GM12878 (cell line): ENCODE measurements at regions of chr1 and their contacts with region 1.

Region 1: GRCh38 chr1:165367375-165367993 is 11.0 kb upstream of the LMX1A start:
- DNase-seq: peak; percentile 3
- ATAC-seq: peak; percentile 91
- H3K4me3 ChIP-seq: no peak overlapping the region
- H3K27ac ChIP-seq: no peak overlapping the region
- H3K4me1 ChIP-seq: no peaks in the 10 kb centered on the region
- H3K27me3 ChIP-seq: no peaks in the 10 kb centered on the region; a peak in 1 of 4 replicates
- CTCF ChIP-seq: peak; percentile 79 to 97 (median 96)
- EP300 ChIP-seq: no peak
- POLR2A ChIP-seq: no peak
- RAD21 ChIP-seq: peak; percentile 53

Region 2: GRCh38 chr1:165129568-165130164 is 237.8 kb before region 1 on chr1:
- CTCF ChIA-PET with region 1: interaction called, 13 read pairs
- POLR2A ChIA-PET with region 1: no interaction called
- RAD21 ChIA-PET with region 1: interaction called, 5 read pairs
- SMC1A ChIA-PET with region 1: interaction called, 9 read pairs
- in situ Hi-C with region 1: no loop called
- intact Hi-C with region 1: no loop called
- DNase-seq: no peak
- ATAC-seq: peak; percentile 89
- H3K4me3 ChIP-seq: no peak overlapping the region
- H3K27ac ChIP-seq: no peak overlapping the region
- H3K4me1 ChIP-seq: no peaks in the 10 kb centered on the region
- H3K27me3 ChIP-seq: no peaks in the 10 kb centered on the region; a peak in 1 of 4 replicates
- CTCF ChIP-seq: peak; percentile 65 to 69 (median 68)
- EP300 ChIP-seq: no peak
- POLR2A ChIP-seq: no peak
- RAD21 ChIP-seq: peak; percentile 40

Region 3: GRCh38 chr1:165257969-165258459 is 109.5 kb before region 1 on chr1:
- CTCF ChIA-PET with region 1: interaction called, 37 read pairs
- POLR2A ChIA-PET with region 1: no interaction called
- RAD21 ChIA-PET with region 1: interaction called, 3 read pairs
- SMC1A ChIA-PET with region 1: interaction called, 6 read pairs
- in situ Hi-C with region 1: no loop called
- intact Hi-C with region 1: loop called (anchors 2 kb)
- DNase-seq: peak; percentile 9
- ATAC-seq: peak; percentile 88
- H3K4me3 ChIP-seq: no peak overlapping the region
- H3K27ac ChIP-seq: no peak overlapping the region
- H3K4me1 ChIP-seq: no peaks in the 10 kb centered on the region
- H3K27me3 ChIP-seq: no peaks in the 10 kb centered on the region
- CTCF ChIP-seq: peak; percentile 67 to 82 (median 76)
- EP300 ChIP-seq: no peak
- POLR2A ChIP-seq: no peak
- RAD21 ChIP-seq: peak; percentile 48

Region 4: GRCh38 chr1:165325460-165326203 is 41.9 kb before region 1 on chr1:
- CTCF ChIA-PET with region 1: no interaction called
- POLR2A ChIA-PET with region 1: no interaction called
- RAD21 ChIA-PET with region 1: no interaction called
- SMC1A ChIA-PET with region 1: no interaction called
- in situ Hi-C with region 1: no loop called
- intact Hi-C with region 1: no loop called
- DNase-seq: no peak
- ATAC-seq: no peak
- H3K4me3 ChIP-seq: no peak overlapping the region
- H3K27ac ChIP-seq: no peak overlapping the region
- H3K4me1 ChIP-seq: no peaks in the 10 kb centered on the region
- H3K27me3 ChIP-seq: no peaks in the 10 kb centered on the region
- CTCF ChIP-seq: no peak
- EP300 ChIP-seq: no peak
- POLR2A ChIP-seq: no peak
- RAD21 ChIP-seq: no peak

Region 5: DNA sequence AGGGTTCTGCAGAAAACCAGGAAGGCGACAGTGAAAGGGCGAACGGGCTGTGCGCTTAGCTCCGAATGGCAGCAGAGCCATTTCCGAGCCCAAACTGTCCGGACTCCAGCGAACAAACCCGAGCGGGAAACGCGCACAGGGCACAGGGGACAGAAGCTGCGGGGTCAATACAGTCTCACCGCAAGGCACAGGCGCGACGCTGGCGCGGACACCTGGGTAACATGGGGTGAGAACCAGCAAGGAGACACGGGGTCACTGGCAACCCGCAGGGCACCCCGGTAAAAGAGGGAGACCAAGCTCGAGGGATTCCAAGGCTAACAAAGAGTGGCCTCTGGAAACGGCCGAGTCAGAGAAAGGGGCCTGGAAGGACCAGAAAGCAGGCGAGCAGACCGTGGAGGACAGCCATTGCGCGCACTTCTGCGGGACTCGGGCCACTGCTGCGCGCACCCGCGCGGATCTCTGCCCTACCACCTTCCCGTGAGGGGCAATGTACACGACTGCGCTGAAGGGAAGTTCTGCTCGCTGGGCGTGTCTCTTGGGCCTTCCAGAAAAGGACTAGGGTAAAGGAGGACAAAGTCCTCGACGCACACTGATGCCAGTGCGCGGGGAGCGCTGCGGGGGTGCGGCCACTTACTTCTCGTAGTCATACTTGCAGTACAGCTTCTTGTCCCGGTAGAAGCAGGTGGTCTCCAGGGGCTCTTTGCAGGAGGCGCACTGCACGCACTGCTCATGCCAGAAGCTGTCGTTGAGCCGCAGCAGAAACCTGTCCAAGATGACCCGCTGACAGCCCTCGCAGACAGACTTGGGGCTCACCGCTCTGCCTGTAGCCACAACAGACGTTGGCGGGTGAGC is 14.8 kb before region 1 on chr1:
- CTCF ChIA-PET with region 1: interaction called, 15 read pairs
- POLR2A ChIA-PET with region 1: no interaction called
- RAD21 ChIA-PET with region 1: no interaction called
- SMC1A ChIA-PET with region 1: no interaction called
- in situ Hi-C with region 1: no loop called
- intact Hi-C with region 1: no loop called
- DNase-seq: no peak
- ATAC-seq: no peak
- H3K4me3 ChIP-seq: no peak overlapping the region
- H3K27ac ChIP-seq: no peak overlapping the region
- H3K4me1 ChIP-seq: no peaks in the 10 kb centered on the region
- H3K27me3 ChIP-seq: peaks cover 14 to 15% of the 10 kb centered on the region in 2 experiments
- CTCF ChIP-seq: no peak
- EP300 ChIP-seq: no peak
- POLR2A ChIP-seq: no peak
- RAD21 ChIP-seq: no peak

Region 6: GRCh38 chr1:165392634-165393571 is 25.4 kb after region 1 on chr1:
- CTCF ChIA-PET with region 1: interaction called, 12 read pairs
- POLR2A ChIA-PET with region 1: no interaction called
- RAD21 ChIA-PET with region 1: interaction called, 3 read pairs
- SMC1A ChIA-PET with region 1: interaction called, 10 read pairs
- in situ Hi-C with region 1: no loop called
- intact Hi-C with region 1: no loop called
- DNase-seq: peak; percentile 64
- ATAC-seq: peak; percentile 99
- H3K4me3 ChIP-seq: no peak overlapping the region
- H3K27ac ChIP-seq: no peak overlapping the region
- H3K4me1 ChIP-seq: peaks cover 9% of the 10 kb centered on the region; the same call in 1 of the 2 replicates
- H3K27me3 ChIP-seq: peaks cover 1 to 3% of the 10 kb centered on the region in 2 experiments; a peak in 2 of 4 replicates
- CTCF ChIP-seq: peak; percentile 95 to 96 (median 95)
- EP300 ChIP-seq: peak in 1 of 2 experiments; percentile 15; a peak in 2 of 4 replicates
- POLR2A ChIP-seq: no peak
- RAD21 ChIP-seq: peak; percentile 88